A673 (cell line): ENCODE measurements at regions of chr3 and their contacts with region 1.

Region 1: GRCh38 chr3:49939858-49940666 is at the start of gene RBM6:
- DNase-seq: peak; percentile 95
- H3K4me3 ChIP-seq: peak within 1 kb of the TSS; percentile 76
- H3K27ac ChIP-seq: peak within 1 kb of the TSS; percentile 87
- H3K4me1 ChIP-seq: no peaks in the 10 kb centered on the region
- H3K27me3 ChIP-seq: no peaks in the 10 kb centered on the region
- CTCF ChIP-seq: no peak
- total RNA-seq, gene RBM6: 55.9 and 64.3 TPM in 2 replicates

Region 2: DNA sequence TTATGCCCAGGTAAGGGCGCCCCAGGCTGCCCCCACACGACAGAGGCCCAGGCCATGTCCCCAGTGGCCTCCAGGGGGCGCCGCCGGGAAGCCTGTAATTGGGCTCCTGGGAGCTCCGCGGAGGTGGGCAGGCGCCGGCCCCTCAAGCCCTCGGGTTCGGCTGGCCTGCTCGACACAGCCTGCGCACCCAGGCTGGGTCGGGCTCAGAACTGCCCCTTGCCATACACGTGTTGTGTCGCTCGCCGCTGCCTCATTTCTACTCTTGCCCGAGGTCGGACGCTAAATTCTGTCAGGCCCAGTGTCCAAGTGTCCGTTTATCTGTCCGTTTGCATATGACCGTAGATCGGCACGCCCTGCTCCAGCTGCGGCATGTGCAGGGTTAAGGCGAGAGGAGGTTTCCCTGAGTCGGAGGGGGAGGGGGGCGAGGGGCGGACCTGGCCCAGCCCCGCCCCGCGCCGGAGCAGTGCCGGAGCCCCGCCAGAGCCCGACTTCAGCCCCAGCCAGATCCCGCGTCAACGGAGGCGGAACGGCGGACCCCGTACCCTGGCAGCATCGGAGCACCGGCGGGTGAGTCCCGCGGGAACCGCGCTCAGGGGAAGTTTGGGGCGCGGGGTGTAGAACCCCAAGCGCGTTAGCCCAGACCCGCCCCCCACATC is 768.8 kb before region 1 on chr3 and contains the start of gene KLHDC8B:
- CTCF ChIA-PET with region 1: no interaction called
- POLR2A ChIA-PET with region 1: no interaction called
- intact Hi-C with region 1: no loop called
- DNase-seq: peak; percentile 62
- H3K4me3 ChIP-seq: peak within 1 kb of the TSS; percentile 58
- H3K27ac ChIP-seq: peak within 1 kb of the TSS; percentile 63
- H3K4me1 ChIP-seq: no peaks in the 10 kb centered on the region
- H3K27me3 ChIP-seq: no peaks in the 10 kb centered on the region
- CTCF ChIP-seq: peak; percentile 74
- total RNA-seq, gene KLHDC8B: 5.1 and 6.9 TPM in 2 replicates

Region 3: DNA sequence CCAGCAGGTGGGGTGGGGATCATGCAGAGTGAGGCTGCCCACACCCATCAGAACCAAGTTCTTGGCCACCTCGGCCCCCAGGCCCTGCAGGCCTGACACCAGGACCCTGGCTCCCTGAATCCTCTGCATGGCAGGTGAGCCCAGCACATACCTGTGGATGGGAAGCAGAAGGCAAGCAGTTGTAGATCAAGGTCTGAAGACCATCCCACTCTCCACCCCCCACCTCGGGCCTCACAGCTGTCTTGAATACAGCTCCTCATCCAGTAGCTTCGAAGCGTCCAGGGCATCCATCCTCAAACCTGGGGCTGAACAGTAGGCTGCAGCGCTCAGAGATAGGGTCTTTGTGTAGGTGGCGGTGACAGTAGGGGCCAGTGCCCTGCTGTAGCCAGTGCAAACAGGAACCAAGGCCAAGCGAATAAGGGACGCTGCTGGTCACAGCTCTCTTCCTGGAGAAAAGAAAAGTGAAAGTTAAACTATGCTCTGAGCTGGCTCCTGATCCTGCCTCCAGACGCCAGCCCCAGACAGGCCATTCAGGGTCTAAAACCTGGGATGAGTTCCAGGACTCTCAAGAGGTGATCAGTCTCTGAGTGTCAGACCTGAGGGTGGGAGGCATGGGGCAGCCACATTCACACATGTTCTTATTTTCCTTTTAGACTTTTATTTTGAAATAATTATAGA is 126.4 kb before region 1 on chr3 and contains the start of gene UBA7:
- CTCF ChIA-PET with region 1: no interaction called
- POLR2A ChIA-PET with region 1: interaction called, 13 read pairs
- intact Hi-C with region 1: no loop called
- DNase-seq: no peak
- H3K4me3 ChIP-seq: no peak within 1 kb of the TSS
- H3K27ac ChIP-seq: no peak within 1 kb of the TSS
- H3K4me1 ChIP-seq: no peaks in the 10 kb centered on the region
- H3K27me3 ChIP-seq: no peaks in the 10 kb centered on the region
- CTCF ChIP-seq: no peak
- total RNA-seq, gene UBA7: 2.2 and 3.8 TPM in 2 replicates

Region 4: GRCh38 chr3:49955636-49956035 is 15.6 kb after region 1 on chr3:
- CTCF ChIA-PET with region 1: no interaction called
- POLR2A ChIA-PET with region 1: no interaction called
- intact Hi-C with region 1: no loop called
- DNase-seq: no peak
- H3K4me3 ChIP-seq: no peak overlapping the region
- H3K27ac ChIP-seq: no peak overlapping the region
- H3K4me1 ChIP-seq: no peaks in the 10 kb centered on the region
- H3K27me3 ChIP-seq: no peaks in the 10 kb centered on the region
- CTCF ChIP-seq: no peak

Region 5: GRCh38 chr3:50192689-50193141 is 252.7 kb after region 1 on chr3:
- CTCF ChIA-PET with region 1: no interaction called
- POLR2A ChIA-PET with region 1: no interaction called
- intact Hi-C with region 1: no loop called
- DNase-seq: peak; percentile 63
- H3K4me3 ChIP-seq: no peak overlapping the region
- H3K27ac ChIP-seq: no peak overlapping the region
- H3K4me1 ChIP-seq: no peaks in the 10 kb centered on the region
- H3K27me3 ChIP-seq: peaks cover 15% of the 10 kb centered on the region
- CTCF ChIP-seq: peak; percentile 74